ENCODE measurements at regions of chr5 and their contacts with region 1.

Region 1: GRCh38 chr5:40879163-40879942 is 29.9 kb upstream of the C7 start:
- DNase-seq: peak; percentile 47
- H3K4me3 ChIP-seq: no peak overlapping the region
- H3K27ac ChIP-seq: no peak overlapping the region
- H3K4me1 ChIP-seq: no peaks in the 10 kb centered on the region
- CTCF ChIP-seq: peak; percentile 92

Region 2: GRCh38 chr5:39570403-39571027 is 1308.8 kb before region 1 on chr5:
- CTCF ChIA-PET with region 1: no interaction called
- POLR2A ChIA-PET with region 1: no interaction called
- intact Hi-C with region 1: loop called (anchors 10 kb)
- DNase-seq: peak; percentile 35
- H3K4me3 ChIP-seq: no peak overlapping the region
- H3K27ac ChIP-seq: no peak overlapping the region
- H3K4me1 ChIP-seq: no peaks in the 10 kb centered on the region
- CTCF ChIP-seq: peak; percentile 79

Region 3: DNA sequence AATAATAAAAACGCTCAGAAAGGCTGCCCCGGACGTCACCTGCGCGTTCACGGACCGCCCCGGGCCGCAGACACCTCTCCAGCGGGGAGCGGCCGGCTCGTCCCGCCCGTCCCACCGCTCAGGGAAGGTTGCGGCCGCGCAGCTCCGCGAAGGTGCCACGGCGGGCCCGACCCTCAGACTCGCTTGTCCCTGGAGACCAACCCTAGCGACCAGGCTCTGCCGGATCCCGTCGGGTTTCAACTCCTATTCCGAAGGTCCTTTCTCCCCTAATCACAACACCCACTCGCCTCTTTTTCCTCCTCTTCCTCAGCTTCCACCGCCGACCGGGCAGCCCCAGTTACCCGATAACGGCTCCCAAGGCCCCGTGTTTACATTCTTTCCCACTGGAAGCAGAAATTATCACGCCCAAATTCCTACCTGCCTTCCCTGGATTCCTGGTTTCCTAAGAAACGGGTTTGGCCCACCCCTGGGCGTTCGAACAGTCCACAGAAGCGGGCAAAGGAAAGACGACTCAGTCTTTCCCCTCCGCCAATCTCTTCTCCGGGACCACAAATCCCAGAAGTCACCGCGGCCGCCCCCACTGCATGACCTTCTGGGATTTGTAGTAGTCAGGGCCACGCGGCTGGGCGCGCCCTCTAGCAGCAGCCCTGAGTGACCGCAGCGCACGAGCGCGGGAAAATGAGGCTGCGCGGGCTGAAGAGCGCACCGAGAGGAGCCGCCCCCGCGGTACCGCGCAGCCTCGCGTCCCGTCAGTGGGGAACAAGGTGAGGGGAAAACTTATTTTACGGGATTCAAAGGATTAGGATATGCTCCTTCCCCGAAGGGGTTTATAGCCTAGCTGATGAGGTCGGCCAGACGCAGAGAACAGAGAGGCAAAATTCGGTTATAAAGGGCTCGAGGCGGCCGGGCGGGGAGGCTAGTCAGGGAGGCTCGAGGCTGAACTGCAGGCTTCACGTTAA is 123.7 kb before region 1 on chr5 and contains the start of gene TTC33:
- CTCF ChIA-PET with region 1: no interaction called
- POLR2A ChIA-PET with region 1: no interaction called
- intact Hi-C with region 1: loop called (anchors 1 kb)
- DNase-seq: peak; percentile 92
- H3K4me3 ChIP-seq: peak within 1 kb of the TSS; percentile 75
- H3K27ac ChIP-seq: peak within 1 kb of the TSS; percentile 66
- H3K4me1 ChIP-seq: peaks cover 16% of the 10 kb centered on the region
- CTCF ChIP-seq: peak; percentile 84
- total RNA-seq, gene TTC33: 15.9 and 22.9 TPM in 2 replicates

Measured in OCI-LY7 (cell line).